ENCODE measurements at regions of chr2 and their contacts with region 1.

Region 1: DNA sequence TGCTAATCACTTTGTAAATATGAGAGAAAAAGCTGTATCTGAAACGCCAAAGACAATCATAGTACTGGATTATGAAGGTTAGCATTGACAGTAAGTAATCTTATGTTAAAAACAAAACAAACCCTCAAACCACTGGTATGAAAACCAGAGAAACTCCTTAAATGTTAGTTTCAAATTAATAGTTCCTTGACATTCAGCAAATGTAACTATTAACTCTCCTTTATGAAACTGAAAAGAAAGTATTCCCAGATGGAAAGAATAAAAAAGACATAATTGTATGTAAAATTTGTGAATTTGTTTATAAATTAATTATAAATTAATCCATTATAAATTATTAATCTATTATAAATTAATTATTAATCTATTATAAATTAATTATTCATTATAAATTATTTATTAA is 12.3 kb downstream of the FASTKD1 start:
- DNase-seq: no peak
- ATAC-seq: no peak
- H3K4me3 Mint-ChIP-seq: no peak overlapping the region
- H3K27ac Mint-ChIP-seq: no peak overlapping the region
- H3K4me1 Mint-ChIP-seq: no peaks in the 10 kb centered on the region
- H3K27me3 Mint-ChIP-seq: no peaks in the 10 kb centered on the region
- CTCF ChIP-seq: no peak

Region 2: DNA sequence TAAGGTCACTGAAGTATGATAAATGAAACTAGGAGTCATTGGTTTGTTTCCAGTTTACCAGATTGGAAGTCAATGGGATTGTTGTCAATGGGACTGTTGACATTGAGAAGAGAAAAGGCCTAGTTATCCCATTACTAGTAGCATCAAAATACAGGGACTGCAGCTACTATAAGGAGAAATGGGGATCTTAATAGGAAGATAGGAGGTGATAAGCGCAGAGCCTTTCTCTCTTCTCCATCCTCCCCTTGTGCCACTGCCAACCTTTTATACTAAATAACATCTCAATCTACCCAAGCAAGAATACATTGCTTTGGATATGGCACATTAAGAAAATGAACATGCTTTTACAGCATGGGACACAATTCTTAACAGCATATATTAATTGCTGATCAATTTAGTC is 92.5 kb before region 1 on chr2:
- CTCF ChIA-PET with region 1: no interaction called
- POLR2A ChIA-PET with region 1: no interaction called
- intact Hi-C with region 1: loop called (anchors 2 kb)
- DNase-seq: no peak
- ATAC-seq: peak; percentile 46
- H3K4me3 Mint-ChIP-seq: no peak overlapping the region
- H3K27ac Mint-ChIP-seq: no peak overlapping the region
- H3K4me1 Mint-ChIP-seq: no peaks in the 10 kb centered on the region
- H3K27me3 Mint-ChIP-seq: no peaks in the 10 kb centered on the region
- CTCF ChIP-seq: no peak